ENCODE measurements at regions of chr15 and their contacts with region 1.

Region 1: DNA sequence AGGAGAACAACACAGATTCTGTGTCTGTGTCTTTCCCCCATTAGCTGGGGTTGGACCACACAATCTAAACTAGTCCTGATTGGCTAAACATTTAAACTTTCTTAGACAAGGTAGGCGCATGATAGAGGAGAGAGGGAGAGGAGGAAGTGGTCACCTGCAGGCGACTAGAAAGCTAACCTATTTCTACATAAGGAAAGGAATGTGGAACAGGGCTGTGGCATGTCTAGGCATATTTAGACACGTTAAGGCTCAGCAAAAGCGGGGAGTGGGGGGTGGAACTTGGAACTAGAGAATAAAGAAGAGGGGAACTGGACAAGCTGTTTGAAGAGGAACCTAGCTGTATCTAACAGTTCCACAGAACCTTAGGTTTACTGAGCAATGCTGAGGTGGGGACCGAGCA is 12.8 kb downstream of the LRRC28 start:
- DNase-seq: no peak
- H3K4me3 ChIP-seq: no peak overlapping the region
- H3K27ac ChIP-seq: no peak overlapping the region
- H3K4me1 ChIP-seq: peaks cover 0 to 3% (median 0%) of the 10 kb centered on the region in 4 experiments
- H3K27me3 ChIP-seq: no peaks in the 10 kb centered on the region

Region 2: GRCh38 chr15:99253381-99254090 is 10.6 kb before region 1 on chr15:
- CTCF ChIA-PET with region 1: interaction called, 10 read pairs
- POLR2A ChIA-PET with region 1: no interaction called
- DNase-seq: no peak
- H3K4me3 ChIP-seq: no peak overlapping the region
- H3K27ac ChIP-seq: no peak overlapping the region
- H3K4me1 ChIP-seq: peaks cover 18 to 32% (median 27%) of the 10 kb centered on the region in 4 experiments
- H3K27me3 ChIP-seq: no peaks in the 10 kb centered on the region

Region 3: DNA sequence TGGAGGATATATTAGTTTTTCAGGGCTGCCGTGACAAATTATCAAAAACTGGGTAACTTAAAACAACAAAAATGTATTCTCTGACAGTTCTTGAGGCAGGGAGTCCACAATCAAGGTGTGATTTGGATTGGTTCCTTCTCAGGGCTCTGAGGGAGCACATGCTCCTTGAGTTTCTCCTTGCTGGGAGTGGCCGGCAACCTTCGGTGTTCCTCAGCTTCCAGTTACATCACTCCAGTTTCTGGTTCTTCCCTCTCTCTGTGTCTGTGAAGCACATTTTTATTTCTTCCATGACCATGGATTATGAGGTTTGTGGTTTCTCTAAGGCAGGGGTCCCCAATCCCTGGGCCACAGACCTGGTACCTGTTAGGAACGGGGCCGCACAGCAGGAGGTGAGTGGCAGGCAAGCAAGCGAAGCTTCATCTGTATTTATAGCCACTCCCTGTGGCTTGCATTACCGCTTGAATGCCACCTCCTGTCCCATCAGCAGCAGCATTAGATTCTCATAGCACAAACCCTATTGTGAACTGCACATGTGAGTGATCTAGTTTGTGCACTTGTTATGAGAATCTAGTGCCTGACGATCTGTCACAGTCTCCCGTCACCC is 11.5 kb after region 1 on chr15:
- CTCF ChIA-PET with region 1: interaction called, 20 read pairs
- POLR2A ChIA-PET with region 1: interaction called, 3 read pairs
- DNase-seq: no peak
- H3K4me3 ChIP-seq: no peak overlapping the region
- H3K27ac ChIP-seq: no peak overlapping the region
- H3K4me1 ChIP-seq: peaks cover 0 to 5% (median 3%) of the 10 kb centered on the region in 4 experiments
- H3K27me3 ChIP-seq: no peaks in the 10 kb centered on the region

Region 4: DNA sequence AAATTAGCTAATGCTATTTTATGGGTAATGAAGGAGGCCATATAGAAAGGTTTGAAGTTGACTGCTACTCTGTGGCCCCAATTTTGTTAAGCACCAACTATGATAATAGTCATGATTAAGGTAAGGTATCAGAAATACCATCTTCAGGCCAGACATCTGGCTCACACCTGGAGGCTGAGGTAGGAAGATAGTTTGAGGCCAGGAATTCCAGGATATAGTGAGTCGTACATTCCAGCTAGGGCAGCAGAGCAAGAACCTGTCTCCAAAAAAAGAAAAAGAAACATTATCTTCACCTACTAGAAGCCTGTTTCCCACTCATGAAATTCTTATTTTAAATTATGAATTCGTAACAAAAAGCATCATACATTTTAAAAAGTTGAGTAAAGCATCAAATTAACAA is 51.5 kb after region 1 on chr15:
- CTCF ChIA-PET with region 1: no interaction called
- POLR2A ChIA-PET with region 1: no interaction called
- DNase-seq: no peak
- H3K4me3 ChIP-seq: no peak overlapping the region
- H3K27ac ChIP-seq: no peak overlapping the region
- H3K4me1 ChIP-seq: no peaks in the 10 kb centered on the region
- H3K27me3 ChIP-seq: no peaks in the 10 kb centered on the region